PC-3 (cell line): ENCODE measurements at regions of chr20 and their contacts with region 1.

Region 1: GRCh38 chr20:43893930-43894329 is 20.7 kb upstream of the TOX2 start:
- DNase-seq: no peak
- ATAC-seq: no peak; the same call in 1 of the 2 replicates
- H3K4me3 ChIP-seq: no peak overlapping the region
- H3K27ac ChIP-seq: no peak overlapping the region
- H3K4me1 ChIP-seq: peaks cover 3% of the 10 kb centered on the region; the same call in 1 of the 2 replicates
- H3K27me3 ChIP-seq: no peaks in the 10 kb centered on the region
- CTCF ChIP-seq: no peak

Region 2: DNA sequence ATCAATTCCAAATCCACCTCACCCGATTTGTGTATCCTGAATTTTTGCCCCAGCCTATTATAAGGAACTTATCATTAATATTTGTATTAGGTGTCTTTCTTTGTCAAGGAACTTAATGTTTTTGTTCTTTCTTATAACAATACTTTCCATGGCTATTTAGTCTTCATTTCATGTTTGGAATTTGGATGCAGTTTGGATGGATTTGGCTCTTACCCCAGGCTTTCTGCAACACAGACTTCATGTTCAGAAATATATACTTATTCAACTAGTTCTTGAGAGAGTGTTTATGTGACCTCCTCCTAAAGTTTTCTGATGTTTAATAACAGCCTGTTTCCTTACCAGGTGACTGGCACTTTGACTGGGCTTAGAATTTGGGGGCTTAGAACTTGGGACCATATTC is 15.2 kb before region 1 on chr20:
- CTCF ChIA-PET with region 1: no interaction called
- POLR2A ChIA-PET with region 1: interaction called, 28 read pairs
- intact Hi-C with region 1: no loop called
- DNase-seq: no peak
- ATAC-seq: no peak
- H3K4me3 ChIP-seq: no peak overlapping the region
- H3K27ac ChIP-seq: no peak overlapping the region
- H3K4me1 ChIP-seq: peaks cover 9% of the 10 kb centered on the region
- H3K27me3 ChIP-seq: no peaks in the 10 kb centered on the region
- CTCF ChIP-seq: no peak

Region 3: GRCh38 chr20:43925801-43926200 is 31.9 kb after region 1 on chr20:
- CTCF ChIA-PET with region 1: interaction called, 12 read pairs
- POLR2A ChIA-PET with region 1: no interaction called
- intact Hi-C with region 1: no loop called
- DNase-seq: peak; percentile 52
- ATAC-seq: peak; percentile 39
- H3K4me3 ChIP-seq: no peak overlapping the region
- H3K27ac ChIP-seq: no peak overlapping the region
- H3K4me1 ChIP-seq: peaks cover 41% of the 10 kb centered on the region
- H3K27me3 ChIP-seq: no peaks in the 10 kb centered on the region
- CTCF ChIP-seq: 0 out of 2 replicates have a peak, but pooled peaks have one; percentile 19

Region 4: GRCh38 chr20:44137210-44137801 is 243.4 kb after region 1 on chr20:
- CTCF ChIA-PET with region 1: no interaction called
- POLR2A ChIA-PET with region 1: no interaction called
- intact Hi-C with region 1: no loop called
- DNase-seq: no peak
- ATAC-seq: no peak
- H3K4me3 ChIP-seq: no peak overlapping the region
- H3K27ac ChIP-seq: no peak overlapping the region
- H3K4me1 ChIP-seq: no peaks in the 10 kb centered on the region
- H3K27me3 ChIP-seq: no peaks in the 10 kb centered on the region
- CTCF ChIP-seq: no peak